ENCODE measurements at regions of chr5 and their contacts with region 1.

Region 1: GRCh38 chr5:179668391-179668790 is 12.4 kb downstream of the CBY3 start:
- H3K4me3 Mint-ChIP-seq: no peak overlapping the region
- H3K27ac Mint-ChIP-seq: no peak overlapping the region
- H3K4me1 Mint-ChIP-seq: no peaks in the 10 kb centered on the region
- H3K27me3 Mint-ChIP-seq: no peaks in the 10 kb centered on the region

Region 2: GRCh38 chr5:179462040-179462439 is 206.4 kb before region 1 on chr5:
- intact Hi-C with region 1: no loop called
- H3K4me3 Mint-ChIP-seq: no peak overlapping the region
- H3K27ac Mint-ChIP-seq: no peak overlapping the region
- H3K4me1 Mint-ChIP-seq: no peaks in the 10 kb centered on the region
- H3K27me3 Mint-ChIP-seq: no peaks in the 10 kb centered on the region

Region 3: GRCh38 chr5:179623003-179623880 is 45.1 kb before region 1 on chr5 and contains the start of gene HNRNPH1:
- intact Hi-C with region 1: loop called (anchors 5 kb)
- H3K4me3 Mint-ChIP-seq: peak within 1 kb of the TSS; percentile 96
- H3K27ac Mint-ChIP-seq: peak within 1 kb of the TSS; percentile 97
- H3K4me1 Mint-ChIP-seq: peaks cover 42% of the 10 kb centered on the region
- H3K27me3 Mint-ChIP-seq: no peaks in the 10 kb centered on the region

Region 4: GRCh38 chr5:180343831-180344327 is 675.5 kb after region 1 on chr5:
- intact Hi-C with region 1: no loop called
- H3K4me3 Mint-ChIP-seq: no peak overlapping the region
- H3K27ac Mint-ChIP-seq: no peak overlapping the region
- H3K4me1 Mint-ChIP-seq: peaks cover 6% of the 10 kb centered on the region
- H3K27me3 Mint-ChIP-seq: peaks cover 31% of the 10 kb centered on the region